PC-9 (cell line): ENCODE measurements at regions of chr7 and their contacts with region 1.

Region 1: DNA sequence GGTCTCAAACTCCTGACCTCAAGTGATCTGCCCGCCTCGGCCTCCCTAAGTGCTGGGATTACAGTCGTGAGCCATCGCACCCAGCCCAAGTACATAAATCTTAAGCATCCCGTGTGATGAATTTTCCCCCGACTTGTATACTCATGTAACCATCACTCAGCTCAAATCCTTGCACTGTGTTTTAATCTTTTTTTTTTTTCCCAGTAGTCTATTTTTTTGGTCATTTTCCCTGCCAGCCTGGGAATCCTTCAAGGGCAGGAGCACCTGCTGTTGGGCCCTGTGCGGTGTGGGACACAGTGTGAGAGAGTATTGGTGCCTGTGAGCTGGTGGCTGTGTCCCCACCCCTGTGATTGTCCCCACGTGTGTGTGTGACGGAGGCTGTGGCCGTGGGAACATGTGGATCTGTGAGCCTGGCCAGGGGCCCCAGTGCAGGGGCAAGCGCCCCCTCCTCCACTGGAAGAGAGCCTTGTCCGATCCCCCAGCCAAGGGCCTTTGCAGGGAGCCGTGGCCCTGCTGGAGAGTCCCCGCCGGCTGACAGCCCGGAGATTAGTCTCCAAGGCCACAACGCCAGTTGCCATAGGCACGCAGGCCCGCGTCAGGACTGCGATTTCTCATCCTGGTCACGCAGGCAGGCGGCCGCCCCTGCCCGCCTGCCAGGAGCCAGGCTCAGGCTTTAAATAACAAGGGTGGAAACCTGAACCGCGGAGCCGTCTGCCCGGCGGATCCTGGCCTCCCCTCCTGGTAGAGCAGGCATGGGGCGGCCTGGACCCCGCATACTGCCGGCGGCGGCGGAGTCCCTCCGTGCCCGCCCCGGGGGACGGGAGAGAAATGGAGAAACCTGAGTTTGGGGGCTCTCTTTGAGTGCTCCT is 26.5 kb downstream of the GTF2IRD1 start:
- DNase-seq: no peak
- H3K4me3 ChIP-seq: no peak overlapping the region
- H3K27ac ChIP-seq: peak overlapping the region; percentile 49; the same call in 1 of the 2 replicates
- H3K4me1 ChIP-seq: peaks cover 93% of the 10 kb centered on the region
- H3K27me3 ChIP-seq: no peaks in the 10 kb centered on the region
- CTCF ChIP-seq: no peak

Region 2: DNA sequence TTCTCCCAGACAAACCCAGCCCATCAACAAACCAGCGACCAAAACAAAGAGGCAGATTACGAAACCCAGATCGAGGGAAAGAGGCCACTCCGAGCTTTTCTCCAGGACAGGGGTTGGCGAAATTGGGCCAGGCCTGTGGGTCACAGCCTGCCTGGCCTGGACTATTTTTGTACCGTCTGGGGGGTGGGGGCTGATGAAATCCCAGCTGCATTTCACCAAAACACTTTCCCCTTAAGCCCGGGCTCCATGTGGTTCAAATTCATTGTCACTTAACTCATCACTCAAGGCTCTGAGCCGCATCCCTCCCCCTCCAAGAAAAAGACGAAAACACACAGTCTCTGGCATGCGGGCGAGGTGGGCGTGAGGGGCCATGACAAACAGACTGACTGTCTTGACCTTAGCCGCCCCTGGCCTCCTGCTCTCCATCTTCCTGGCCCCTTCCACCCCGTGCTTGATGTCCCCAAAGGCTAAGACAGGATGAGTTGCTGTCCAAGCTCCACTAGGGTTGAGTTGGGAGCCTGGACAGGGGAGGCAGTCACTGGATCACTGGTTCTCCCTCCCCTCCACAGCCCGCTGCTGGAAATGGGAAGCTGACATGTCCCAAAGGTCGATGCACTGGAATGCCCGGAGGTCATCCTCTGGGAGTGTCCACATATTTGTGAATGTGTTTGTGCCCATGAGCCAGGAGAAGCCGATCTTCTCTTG is 600.1 kb before region 1 on chr7:
- CTCF ChIA-PET with region 1: no interaction called
- POLR2A ChIA-PET with region 1: no interaction called
- intact Hi-C with region 1: no loop called
- DNase-seq: peak; percentile 39 to 42
- H3K4me3 ChIP-seq: no peak overlapping the region
- H3K27ac ChIP-seq: no peak overlapping the region
- H3K4me1 ChIP-seq: peaks cover 27% of the 10 kb centered on the region
- H3K27me3 ChIP-seq: no peaks in the 10 kb centered on the region
- CTCF ChIP-seq: no peak

Region 3: DNA sequence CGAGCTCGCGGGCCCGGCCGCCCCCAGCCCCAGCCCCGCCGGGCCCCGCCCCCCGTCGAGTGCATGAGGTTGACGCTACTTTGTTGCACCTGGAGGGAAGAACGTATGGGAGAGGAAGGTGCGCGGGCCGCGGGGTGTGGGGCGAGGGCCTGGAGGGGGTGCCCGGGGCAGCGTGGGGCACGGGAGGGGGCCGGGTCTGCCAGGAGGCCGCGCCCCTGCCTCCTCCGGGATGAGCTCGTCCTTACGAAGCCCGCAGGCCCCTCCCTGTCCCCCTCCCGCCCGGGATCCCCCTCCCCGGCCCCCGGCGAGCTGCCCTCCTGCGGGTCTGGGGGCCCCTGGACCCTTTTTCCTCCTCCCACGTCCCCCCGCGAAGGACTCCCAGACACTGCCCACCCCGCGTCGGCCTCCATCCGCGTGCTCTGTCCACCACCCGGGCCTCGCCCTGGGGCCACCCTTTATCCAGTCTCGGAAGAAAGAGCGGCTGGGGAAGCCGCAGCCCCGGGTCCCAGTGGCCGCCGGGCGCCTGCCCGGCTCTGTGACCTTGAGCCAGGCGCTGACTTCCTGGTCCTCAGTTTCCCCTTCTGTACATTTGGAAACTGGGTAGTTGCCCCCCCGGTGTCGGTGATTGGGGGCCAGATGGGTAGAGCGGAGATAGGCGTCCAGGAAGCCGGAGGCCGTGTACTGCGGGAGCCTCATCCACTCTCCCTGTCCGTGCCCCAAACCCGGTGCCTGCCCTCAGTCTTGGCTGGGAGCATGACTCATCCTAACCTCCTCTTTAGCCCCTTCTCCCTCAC is 396.1 kb before region 1 on chr7:
- CTCF ChIA-PET with region 1: no interaction called
- POLR2A ChIA-PET with region 1: no interaction called
- intact Hi-C with region 1: no loop called
- DNase-seq: peak in 1 of 2 experiments; percentile 75
- H3K4me3 ChIP-seq: peak overlapping the region; percentile 97
- H3K27ac ChIP-seq: peak overlapping the region; percentile 62
- H3K4me1 ChIP-seq: peaks cover 24% of the 10 kb centered on the region
- H3K27me3 ChIP-seq: no peaks in the 10 kb centered on the region
- CTCF ChIP-seq: no peak

Region 4: DNA sequence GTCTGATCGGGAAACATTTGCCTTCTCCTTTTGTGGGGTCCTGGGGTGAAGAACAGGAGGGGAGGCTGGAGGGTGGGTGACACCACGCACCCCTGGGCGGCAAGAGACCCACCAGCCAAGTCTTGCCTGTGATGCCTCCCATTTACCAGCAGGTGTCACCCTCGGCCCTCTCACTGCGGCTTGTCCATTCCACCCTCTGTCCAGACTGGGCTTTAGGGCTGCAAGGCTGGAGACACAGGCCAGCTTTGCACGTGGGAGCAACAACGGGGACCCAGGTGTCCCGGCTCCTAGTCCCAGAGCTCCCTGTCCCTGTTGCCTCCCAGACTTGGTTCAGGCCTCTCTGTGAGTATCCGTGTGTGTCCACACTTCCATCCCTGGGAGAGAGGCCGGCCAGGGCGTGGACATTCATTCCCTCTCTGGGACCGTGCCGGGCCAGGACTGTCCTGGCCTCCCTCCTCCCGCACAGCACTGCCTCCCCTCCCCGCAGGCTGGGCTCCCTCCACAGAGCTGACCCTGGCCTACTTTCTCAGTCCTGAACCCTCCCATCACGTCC is 62.7 kb before region 1 on chr7:
- CTCF ChIA-PET with region 1: no interaction called
- POLR2A ChIA-PET with region 1: no interaction called
- intact Hi-C with region 1: loop called (anchors 10 kb)
- DNase-seq: peak; percentile 44 to 75
- H3K4me3 ChIP-seq: no peak overlapping the region
- H3K27ac ChIP-seq: no peak overlapping the region
- H3K4me1 ChIP-seq: no peaks in the 10 kb centered on the region
- H3K27me3 ChIP-seq: no peaks in the 10 kb centered on the region
- CTCF ChIP-seq: peak; percentile 96

Region 5: GRCh38 chr7:74449809-74450397 is 30.3 kb before region 1 on chr7:
- CTCF ChIA-PET with region 1: no interaction called
- POLR2A ChIA-PET with region 1: no interaction called
- intact Hi-C with region 1: loop called (anchors 1 kb)
- DNase-seq: peak in 1 of 2 experiments; percentile 45
- H3K4me3 ChIP-seq: no peak overlapping the region
- H3K27ac ChIP-seq: no peak overlapping the region
- H3K4me1 ChIP-seq: peaks cover 7% of the 10 kb centered on the region
- H3K27me3 ChIP-seq: no peaks in the 10 kb centered on the region
- CTCF ChIP-seq: peak; percentile 74

Region 6: GRCh38 chr7:74582017-74582416 is 101.8 kb after region 1 on chr7:
- CTCF ChIA-PET with region 1: no interaction called
- POLR2A ChIA-PET with region 1: interaction called, 4 read pairs
- intact Hi-C with region 1: loop called (anchors 1 kb)
- DNase-seq: peak; percentile 91 to 94
- H3K4me3 ChIP-seq: no peak overlapping the region
- H3K27ac ChIP-seq: peak overlapping the region; percentile 89
- H3K4me1 ChIP-seq: peaks cover 85% of the 10 kb centered on the region
- H3K27me3 ChIP-seq: no peaks in the 10 kb centered on the region
- CTCF ChIP-seq: no peak

Region 7: DNA sequence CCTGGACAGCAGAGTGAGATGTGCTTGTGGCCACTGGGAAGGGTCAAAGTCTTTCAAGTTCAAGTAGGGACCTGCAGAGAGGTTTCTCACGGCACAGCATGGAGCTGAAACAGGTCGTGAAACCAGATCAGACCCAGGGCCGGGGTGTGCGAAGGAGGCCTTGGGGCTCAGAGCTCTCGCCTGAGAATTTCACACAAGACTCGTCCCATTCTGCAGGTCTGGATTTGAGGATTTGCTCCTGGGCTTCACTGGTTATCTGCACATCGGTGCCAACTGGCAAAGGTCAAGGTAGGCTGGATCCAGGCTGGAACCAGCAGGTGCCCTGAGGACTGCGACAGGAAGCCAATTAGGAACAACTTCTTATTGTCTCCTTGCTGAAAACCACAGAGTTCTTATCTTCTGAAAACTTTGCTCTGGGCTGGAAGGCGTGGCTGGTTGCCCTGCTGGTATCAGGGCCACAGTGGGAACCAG is 153.3 kb after region 1 on chr7:
- CTCF ChIA-PET with region 1: no interaction called
- POLR2A ChIA-PET with region 1: no interaction called
- intact Hi-C with region 1: loop called (anchors 5 kb)
- DNase-seq: peak; percentile 63
- H3K4me3 ChIP-seq: no peak overlapping the region
- H3K27ac ChIP-seq: peak overlapping the region; percentile 13; the same call in 1 of the 2 replicates
- H3K4me1 ChIP-seq: peaks cover 32% of the 10 kb centered on the region
- H3K27me3 ChIP-seq: no peaks in the 10 kb centered on the region
- CTCF ChIP-seq: no peak

Region 8: GRCh38 chr7:74674166-74674565 is 194.0 kb after region 1 on chr7:
- CTCF ChIA-PET with region 1: no interaction called
- POLR2A ChIA-PET with region 1: no interaction called
- intact Hi-C with region 1: no loop called
- DNase-seq: peak in 1 of 2 experiments; percentile 10
- H3K4me3 ChIP-seq: no peak overlapping the region
- H3K27ac ChIP-seq: no peak overlapping the region
- H3K4me1 ChIP-seq: no peaks in the 10 kb centered on the region
- H3K27me3 ChIP-seq: no peaks in the 10 kb centered on the region
- CTCF ChIP-seq: no peak